Caco-2 (cell line): ENCODE measurements at regions of chr7 and their contacts with region 1.

Region 1: DNA sequence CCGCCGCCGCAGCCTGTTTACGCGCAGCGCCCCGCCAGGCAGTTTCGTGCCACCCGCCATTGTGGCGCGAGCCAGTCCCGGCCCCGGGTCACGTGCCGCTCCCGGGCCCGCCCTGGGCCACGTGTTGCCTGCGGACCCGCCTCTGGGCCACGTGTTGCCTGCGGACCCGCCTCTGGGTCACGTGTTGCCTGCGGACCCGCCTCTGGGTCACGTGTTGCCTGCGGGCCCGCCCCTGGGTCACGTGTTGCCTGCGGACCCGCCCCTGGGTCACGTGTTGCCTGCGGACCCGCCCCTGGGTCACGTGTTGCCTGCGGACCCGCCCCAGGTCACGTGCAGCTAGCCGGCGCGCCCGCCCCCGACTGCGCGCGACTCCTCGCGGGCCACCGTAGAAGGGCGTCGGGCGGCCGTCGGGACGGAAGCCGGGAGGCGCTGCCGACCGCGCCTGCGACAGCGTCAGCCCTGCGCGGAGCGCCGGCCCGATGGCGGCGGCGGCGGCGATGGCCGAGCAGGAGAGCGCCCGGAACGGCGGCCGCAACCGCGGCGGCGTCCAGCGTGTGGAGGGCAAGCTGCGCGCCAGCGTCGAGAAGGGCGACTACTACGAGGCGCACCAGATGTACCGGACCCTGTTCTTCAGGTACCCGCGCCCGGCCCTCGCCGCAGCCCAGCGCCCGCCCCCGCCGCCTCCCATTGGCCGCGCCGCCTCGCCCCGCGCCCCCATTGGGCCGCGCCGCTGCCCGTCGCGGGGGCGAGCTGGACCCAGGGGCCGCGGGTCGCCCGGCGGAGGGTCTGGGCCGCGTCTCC is at the start of gene GET4:
- DNase-seq: peak; percentile 98 to 99
- H3K4me3 ChIP-seq: peak within 1 kb of the TSS; percentile 97
- H3K4me3 Mint-ChIP-seq: peak within 1 kb of the TSS; percentile 100
- H3K27ac Mint-ChIP-seq: peak within 1 kb of the TSS; percentile 95
- H3K4me1 ChIP-seq: peaks cover 35% of the 10 kb centered on the region
- H3K4me1 Mint-ChIP-seq: peaks cover 9% of the 10 kb centered on the region
- H3K27me3 ChIP-seq: no peaks in the 10 kb centered on the region
- H3K27me3 Mint-ChIP-seq: no peaks in the 10 kb centered on the region
- CTCF ChIP-seq: peak; percentile 9 to 19
- total RNA-seq, gene GET4: 124 and 130 TPM in 2 replicates

Region 2: GRCh38 chr7:322111-322671 is 554.2 kb before region 1 on chr7:
- CTCF ChIA-PET with region 1: interaction called, 5 read pairs
- POLR2A ChIA-PET with region 1: no interaction called
- intact Hi-C with region 1: loop called (anchors 2 kb)
- DNase-seq: peak; percentile 77 to 96
- H3K4me3 ChIP-seq: no peak overlapping the region
- H3K4me3 Mint-ChIP-seq: peak overlapping the region; percentile 29
- H3K27ac Mint-ChIP-seq: no peak overlapping the region
- H3K4me1 ChIP-seq: peaks cover 62% of the 10 kb centered on the region
- H3K4me1 Mint-ChIP-seq: peaks cover 50% of the 10 kb centered on the region
- H3K27me3 ChIP-seq: no peaks in the 10 kb centered on the region
- H3K27me3 Mint-ChIP-seq: no peaks in the 10 kb centered on the region
- CTCF ChIP-seq: peak; percentile 81 to 93

Region 3: GRCh38 chr7:786472-787255 is 89.7 kb before region 1 on chr7:
- CTCF ChIA-PET with region 1: no interaction called
- POLR2A ChIA-PET with region 1: no interaction called
- intact Hi-C with region 1: loop called (anchors 1 kb)
- DNase-seq: peak; percentile 66 to 79
- H3K4me3 ChIP-seq: no peak overlapping the region
- H3K4me3 Mint-ChIP-seq: no peak overlapping the region
- H3K27ac Mint-ChIP-seq: no peak overlapping the region
- H3K4me1 ChIP-seq: no peaks in the 10 kb centered on the region
- H3K4me1 Mint-ChIP-seq: no peaks in the 10 kb centered on the region
- H3K27me3 ChIP-seq: no peaks in the 10 kb centered on the region
- H3K27me3 Mint-ChIP-seq: no peaks in the 10 kb centered on the region
- CTCF ChIP-seq: peak; percentile 71 to 90

Region 4: DNA sequence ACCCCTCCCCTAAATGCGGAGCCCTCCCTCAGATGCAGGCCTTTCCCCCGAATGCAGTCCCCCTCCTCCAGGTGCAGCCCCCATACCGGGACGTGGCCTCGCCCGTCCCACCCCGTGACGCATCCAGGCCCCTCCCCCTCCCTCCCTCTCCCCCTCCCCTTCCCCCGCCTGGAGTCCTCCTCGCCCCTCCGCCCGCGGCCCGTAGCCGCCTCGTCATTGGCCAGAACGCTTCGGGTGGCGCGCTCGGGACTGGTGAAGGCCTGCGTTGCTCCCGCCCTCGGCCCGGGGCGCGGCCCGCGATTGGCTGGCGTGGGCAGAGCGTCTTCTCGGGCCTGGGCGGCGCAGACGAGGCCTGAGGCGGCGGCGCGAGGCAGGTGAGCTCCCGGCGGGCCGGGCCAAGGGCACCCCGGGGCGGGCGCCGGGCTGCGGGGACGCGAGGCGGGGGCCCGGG is 60.0 kb before region 1 on chr7:
- CTCF ChIA-PET with region 1: interaction called, 3 read pairs
- POLR2A ChIA-PET with region 1: interaction called, 3 read pairs
- intact Hi-C with region 1: loop called (anchors 5 kb)
- DNase-seq: peak; percentile 98 to 99
- H3K4me3 ChIP-seq: peak overlapping the region; percentile 82
- H3K4me3 Mint-ChIP-seq: peak overlapping the region; percentile 95
- H3K27ac Mint-ChIP-seq: peak overlapping the region; percentile 70
- H3K4me1 ChIP-seq: no peaks in the 10 kb centered on the region
- H3K4me1 Mint-ChIP-seq: peaks cover 17% of the 10 kb centered on the region
- H3K27me3 ChIP-seq: no peaks in the 10 kb centered on the region
- H3K27me3 Mint-ChIP-seq: no peaks in the 10 kb centered on the region
- CTCF ChIP-seq: no peak

Region 5: DNA sequence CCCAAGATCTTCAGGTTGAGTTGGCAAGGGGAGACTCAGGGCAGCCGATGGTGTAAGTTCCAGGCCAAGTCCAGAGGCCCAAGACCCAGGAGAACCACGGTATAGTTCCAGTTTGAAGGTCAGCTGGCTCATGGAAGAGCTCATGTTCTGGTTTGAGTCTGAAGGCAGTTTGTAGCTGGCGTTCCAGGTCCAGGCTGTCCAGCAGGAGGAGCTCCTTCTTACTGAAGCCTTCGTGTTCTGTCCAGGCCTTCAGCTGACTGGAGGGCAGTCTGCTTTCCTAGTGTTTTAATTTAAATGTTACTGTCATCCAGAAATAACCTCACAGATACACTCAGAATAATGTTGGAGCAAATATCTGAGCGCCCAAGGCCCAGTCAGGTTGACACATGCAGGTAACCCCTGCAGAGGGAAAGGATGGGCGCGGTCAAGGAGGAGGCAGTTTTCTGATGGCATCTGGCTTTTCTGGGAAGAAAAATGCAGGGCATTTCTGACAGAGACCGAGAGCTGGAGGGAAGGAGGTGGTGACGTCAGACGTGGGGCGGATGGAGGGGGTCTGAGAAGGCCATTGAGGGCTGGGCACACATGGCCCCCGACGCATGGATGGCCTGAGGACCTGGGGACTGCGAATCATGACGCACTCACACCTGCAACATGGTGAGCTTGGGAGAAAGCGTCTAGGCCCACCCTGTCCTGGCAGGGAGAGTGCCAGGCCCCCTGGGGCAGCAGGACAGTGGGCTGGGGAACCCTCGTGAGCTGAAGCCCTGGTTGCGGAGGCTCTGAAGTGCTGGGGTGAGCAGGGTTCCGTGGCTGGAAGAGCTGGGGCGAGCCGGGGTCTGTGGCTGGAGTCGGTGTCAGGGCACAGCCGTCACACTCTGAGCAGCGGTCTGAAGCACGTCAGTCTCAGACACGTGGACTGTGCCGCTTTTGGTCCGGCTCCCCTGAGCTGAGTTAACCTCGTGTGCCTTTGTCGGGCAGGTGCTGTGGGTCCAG is 39.7 kb before region 1 on chr7:
- CTCF ChIA-PET with region 1: interaction called, 58 read pairs
- POLR2A ChIA-PET with region 1: interaction called, 4 read pairs
- intact Hi-C with region 1: loop called (anchors 1 kb)
- DNase-seq: peak in 1 of 2 experiments; percentile 63
- H3K4me3 ChIP-seq: no peak overlapping the region
- H3K4me3 Mint-ChIP-seq: no peak overlapping the region
- H3K27ac Mint-ChIP-seq: peak overlapping the region; percentile 73
- H3K4me1 ChIP-seq: peaks cover 9% of the 10 kb centered on the region
- H3K4me1 Mint-ChIP-seq: peaks cover 13% of the 10 kb centered on the region
- H3K27me3 ChIP-seq: no peaks in the 10 kb centered on the region
- H3K27me3 Mint-ChIP-seq: no peaks in the 10 kb centered on the region
- CTCF ChIP-seq: peak; percentile 52 to 83

Region 6: GRCh38 chr7:859359-860030 is 16.9 kb before region 1 on chr7:
- CTCF ChIA-PET with region 1: interaction called, 16 read pairs
- POLR2A ChIA-PET with region 1: interaction called, 3 read pairs
- intact Hi-C with region 1: loop called (anchors 1 kb)
- DNase-seq: peak; percentile 61 to 71
- H3K4me3 ChIP-seq: no peak overlapping the region
- H3K4me3 Mint-ChIP-seq: peak overlapping the region; percentile 57
- H3K27ac Mint-ChIP-seq: peak overlapping the region; percentile 87
- H3K4me1 ChIP-seq: peaks cover 38% of the 10 kb centered on the region
- H3K4me1 Mint-ChIP-seq: peaks cover 42% of the 10 kb centered on the region
- H3K27me3 ChIP-seq: no peaks in the 10 kb centered on the region
- H3K27me3 Mint-ChIP-seq: no peaks in the 10 kb centered on the region
- CTCF ChIP-seq: no peak

Region 7: GRCh38 chr7:909358-910329 is 33.3 kb after region 1 on chr7:
- CTCF ChIA-PET with region 1: no interaction called
- POLR2A ChIA-PET with region 1: no interaction called
- intact Hi-C with region 1: no loop called
- DNase-seq: no peak
- H3K4me3 ChIP-seq: no peak overlapping the region
- H3K4me3 Mint-ChIP-seq: no peak overlapping the region
- H3K27ac Mint-ChIP-seq: no peak overlapping the region
- H3K4me1 ChIP-seq: no peaks in the 10 kb centered on the region
- H3K4me1 Mint-ChIP-seq: no peaks in the 10 kb centered on the region
- H3K27me3 ChIP-seq: no peaks in the 10 kb centered on the region
- H3K27me3 Mint-ChIP-seq: no peaks in the 10 kb centered on the region
- CTCF ChIP-seq: no peak

Region 8: GRCh38 chr7:953547-954327 is 77.4 kb after region 1 on chr7:
- CTCF ChIA-PET with region 1: no interaction called
- POLR2A ChIA-PET with region 1: no interaction called
- intact Hi-C with region 1: loop called (anchors 2 kb)
- DNase-seq: peak; percentile 67 to 74
- H3K4me3 ChIP-seq: peak overlapping the region; percentile 92
- H3K4me3 Mint-ChIP-seq: peak overlapping the region; percentile 59
- H3K27ac Mint-ChIP-seq: no peak overlapping the region
- H3K4me1 ChIP-seq: peaks cover 18% of the 10 kb centered on the region
- H3K4me1 Mint-ChIP-seq: no peaks in the 10 kb centered on the region
- H3K27me3 ChIP-seq: no peaks in the 10 kb centered on the region
- H3K27me3 Mint-ChIP-seq: no peaks in the 10 kb centered on the region
- CTCF ChIP-seq: no peak